Caco-2 (cell line): ENCODE measurements at regions of chr6 and their contacts with region 1.

Region 1: GRCh38 chr6:105624021-105624420 is 221.1 kb upstream of the PREP start:
- DNase-seq: peak; percentile 18 to 40
- H3K4me3 ChIP-seq: no peak overlapping the region
- H3K4me3 Mint-ChIP-seq: no peak overlapping the region
- H3K27ac Mint-ChIP-seq: no peak overlapping the region
- H3K4me1 ChIP-seq: peaks cover 33% of the 10 kb centered on the region
- H3K4me1 Mint-ChIP-seq: peaks cover 34% of the 10 kb centered on the region
- H3K27me3 ChIP-seq: no peaks in the 10 kb centered on the region
- H3K27me3 Mint-ChIP-seq: no peaks in the 10 kb centered on the region
- CTCF ChIP-seq: no peak

Region 2: DNA sequence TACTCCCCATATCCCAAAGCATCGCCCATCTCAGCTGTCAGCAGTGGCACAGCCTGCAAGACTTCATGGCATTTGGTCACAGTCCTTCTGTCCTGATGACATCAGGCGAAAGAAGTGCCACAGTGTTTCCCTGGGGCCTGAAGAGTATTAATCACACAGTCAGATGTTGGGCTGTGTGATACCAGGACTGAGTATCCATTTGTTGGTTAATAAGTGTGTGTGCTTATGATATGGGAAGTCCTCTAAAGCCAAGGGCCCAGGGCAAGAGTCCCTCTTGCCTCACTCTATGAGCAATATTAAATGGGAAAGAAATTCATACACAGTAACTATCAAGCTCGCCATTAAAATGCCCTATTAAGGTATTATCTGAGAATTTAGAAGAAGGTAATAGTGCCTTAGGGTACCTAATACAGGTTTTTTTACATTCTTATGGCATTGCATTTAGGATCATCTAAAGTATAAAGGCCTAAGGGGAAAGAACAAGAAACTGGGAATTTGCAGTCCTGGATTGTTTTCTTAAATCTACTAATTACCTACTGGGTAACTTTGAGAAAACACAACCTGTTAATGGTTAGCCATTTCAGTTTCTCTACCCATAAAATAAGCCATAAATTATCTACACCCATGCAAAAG is 17.1 kb before region 1 on chr6:
- CTCF ChIA-PET with region 1: no interaction called
- POLR2A ChIA-PET with region 1: no interaction called
- intact Hi-C with region 1: loop called (anchors 1 kb)
- DNase-seq: peak; percentile 5 to 39
- H3K4me3 ChIP-seq: no peak overlapping the region
- H3K4me3 Mint-ChIP-seq: no peak overlapping the region
- H3K27ac Mint-ChIP-seq: no peak overlapping the region
- H3K4me1 ChIP-seq: peaks cover 31% of the 10 kb centered on the region
- H3K4me1 Mint-ChIP-seq: peaks cover 6% of the 10 kb centered on the region
- H3K27me3 ChIP-seq: no peaks in the 10 kb centered on the region
- H3K27me3 Mint-ChIP-seq: no peaks in the 10 kb centered on the region
- CTCF ChIP-seq: no peak

Region 3: DNA sequence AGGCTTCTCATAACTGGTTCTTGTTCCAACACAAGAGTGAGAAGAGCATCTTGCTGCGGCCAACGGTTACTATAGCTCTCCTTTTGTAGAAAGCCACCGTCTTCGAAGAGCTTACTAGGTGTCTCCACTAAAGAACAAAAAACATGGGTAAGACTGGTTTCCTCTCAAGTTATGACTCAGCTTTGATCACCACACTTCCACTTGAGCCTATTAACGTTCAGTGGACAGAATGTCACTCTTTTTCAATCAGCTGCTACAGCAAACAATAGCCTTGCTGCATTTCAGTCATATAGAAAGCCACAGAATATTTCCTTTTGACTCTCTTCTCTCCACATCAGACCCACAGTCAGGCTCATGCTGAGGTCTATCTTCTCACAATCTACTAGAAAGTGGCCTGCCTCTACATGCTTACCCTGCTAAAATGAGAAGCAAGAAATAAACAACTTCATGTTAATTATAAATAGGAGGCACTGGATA is 22.4 kb after region 1 on chr6:
- CTCF ChIA-PET with region 1: no interaction called
- POLR2A ChIA-PET with region 1: no interaction called
- intact Hi-C with region 1: no loop called
- DNase-seq: no peak
- H3K4me3 ChIP-seq: no peak overlapping the region
- H3K4me3 Mint-ChIP-seq: no peak overlapping the region
- H3K27ac Mint-ChIP-seq: no peak overlapping the region
- H3K4me1 ChIP-seq: peaks cover 16% of the 10 kb centered on the region; the same call in 1 of the 2 replicates
- H3K4me1 Mint-ChIP-seq: no peaks in the 10 kb centered on the region
- H3K27me3 ChIP-seq: no peaks in the 10 kb centered on the region
- H3K27me3 Mint-ChIP-seq: no peaks in the 10 kb centered on the region
- CTCF ChIP-seq: no peak

Region 4: DNA sequence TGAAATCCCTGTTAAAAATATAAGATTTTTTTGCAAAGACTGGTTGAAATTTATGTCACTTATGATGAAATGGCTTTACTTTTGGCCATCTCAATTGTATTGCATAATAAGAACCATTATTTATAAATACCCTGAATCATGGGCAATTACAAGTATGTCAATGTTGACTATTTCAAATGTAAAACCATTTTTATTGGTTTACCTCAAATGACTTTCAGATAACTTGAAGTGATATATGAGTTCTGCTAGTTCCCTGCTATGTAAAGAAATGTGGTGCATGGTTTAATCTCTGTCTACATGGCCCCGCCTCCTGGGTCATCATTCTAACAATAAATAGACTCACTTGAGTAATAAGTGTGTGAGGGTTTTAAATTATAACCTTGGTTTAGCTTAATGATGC is 54.5 kb after region 1 on chr6:
- CTCF ChIA-PET with region 1: no interaction called
- POLR2A ChIA-PET with region 1: no interaction called
- intact Hi-C with region 1: loop called (anchors 2 kb)
- DNase-seq: peak; percentile 50 to 56
- H3K4me3 ChIP-seq: no peak overlapping the region
- H3K4me3 Mint-ChIP-seq: no peak overlapping the region
- H3K27ac Mint-ChIP-seq: no peak overlapping the region
- H3K4me1 ChIP-seq: peaks cover 25% of the 10 kb centered on the region
- H3K4me1 Mint-ChIP-seq: no peaks in the 10 kb centered on the region
- H3K27me3 ChIP-seq: no peaks in the 10 kb centered on the region
- H3K27me3 Mint-ChIP-seq: no peaks in the 10 kb centered on the region
- CTCF ChIP-seq: no peak